PC-9 (cell line): ENCODE measurements at regions of chr17 and their contacts with region 1.

Region 1: GRCh38 chr17:15954222-15954621 is 9.3 kb downstream of the ADORA2B start:
- DNase-seq: peak; percentile 81 to 91
- H3K4me3 ChIP-seq: no peak overlapping the region
- H3K27ac ChIP-seq: peak overlapping the region; percentile 71
- H3K4me1 ChIP-seq: peaks cover 48% of the 10 kb centered on the region
- H3K27me3 ChIP-seq: no peaks in the 10 kb centered on the region
- CTCF ChIP-seq: no peak

Region 2: DNA sequence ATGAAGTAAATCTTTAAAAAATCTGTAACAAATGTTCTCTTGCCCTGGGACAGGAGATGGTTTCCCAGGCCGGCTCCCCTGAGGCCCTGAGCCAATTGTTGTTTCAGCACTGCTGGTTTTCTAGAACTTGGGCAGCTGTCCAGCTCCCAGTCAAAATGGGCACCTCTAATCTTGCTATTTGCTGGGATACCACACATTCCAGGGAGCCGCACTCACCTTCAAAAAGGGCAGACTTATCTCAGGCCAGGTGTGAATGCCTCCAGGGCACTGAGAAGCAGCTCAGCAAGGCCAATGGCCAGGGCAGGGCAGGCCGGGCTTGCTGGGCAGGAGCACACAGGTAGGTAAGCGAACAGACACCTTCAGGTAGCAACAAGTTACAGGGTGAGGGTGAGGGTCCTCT is 294.6 kb before region 1 on chr17:
- CTCF ChIA-PET with region 1: no interaction called
- POLR2A ChIA-PET with region 1: no interaction called
- intact Hi-C with region 1: loop called (anchors 2 kb)
- DNase-seq: peak; percentile 96 to 97
- H3K4me3 ChIP-seq: no peak overlapping the region; the same call in 1 of the 2 replicates
- H3K27ac ChIP-seq: peak overlapping the region; percentile 98
- H3K4me1 ChIP-seq: peaks cover 55% of the 10 kb centered on the region
- H3K27me3 ChIP-seq: no peaks in the 10 kb centered on the region
- CTCF ChIP-seq: no peak

Region 3: GRCh38 chr17:15981208-15981607 is 27.0 kb after region 1 on chr17:
- CTCF ChIA-PET with region 1: interaction called, 3 read pairs
- POLR2A ChIA-PET with region 1: no interaction called
- intact Hi-C with region 1: loop called (anchors 2 kb)
- DNase-seq: peak in 1 of 2 experiments; percentile 93
- H3K4me3 ChIP-seq: peak overlapping the region; percentile 10; the same call in 1 of the 2 replicates
- H3K27ac ChIP-seq: peak overlapping the region; percentile 93
- H3K4me1 ChIP-seq: peaks cover 42% of the 10 kb centered on the region
- H3K27me3 ChIP-seq: no peaks in the 10 kb centered on the region
- CTCF ChIP-seq: no peak